Heart right ventricle (tissue), 16 donors: ENCODE measurements at regions of chr16 and their contacts with region 1.

Region 1: DNA sequence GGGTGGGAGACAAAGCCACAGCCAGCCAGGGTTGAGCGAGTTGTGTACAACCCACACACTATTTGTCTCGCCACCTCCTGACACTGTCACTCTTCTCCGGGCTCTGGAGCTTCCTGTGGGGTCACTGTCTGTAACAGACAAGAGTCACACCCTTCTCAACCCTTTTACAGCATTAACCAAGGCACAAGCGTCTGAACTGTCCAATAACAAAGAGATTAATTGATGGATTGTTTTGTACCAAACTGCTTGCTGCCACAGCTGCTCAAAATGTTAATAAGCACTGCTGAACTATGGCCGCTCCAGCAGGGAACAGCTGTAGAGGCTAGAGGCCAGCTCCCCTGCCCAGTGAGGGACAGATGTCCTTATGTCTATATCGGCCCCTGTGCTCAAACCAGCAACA is 25.2 kb upstream of the HYDIN start:
- DNase-seq: no peak
- ATAC-seq: peak in 1 of 8 donors; percentile 40
- H3K4me3 ChIP-seq: no peak overlapping the region
- H3K27ac ChIP-seq: no peak overlapping the region
- H3K4me1 ChIP-seq: peaks cover 0 to 5% (median 0%) of the 10 kb centered on the region in 9 donors
- H3K27me3 ChIP-seq: peaks cover 0 to 4% (median 0%) of the 10 kb centered on the region in 7 donors
- CTCF ChIP-seq: no peak

Region 2: GRCh38 chr16:71303938-71304337 is 48.2 kb after region 1 on chr16:
- intact Hi-C with region 1: loop called in 1 of 10 experiments (anchors 10 kb)
- DNase-seq: no peak
- ATAC-seq: no peak
- H3K4me3 ChIP-seq: no peak overlapping the region
- H3K27ac ChIP-seq: no peak overlapping the region
- H3K4me1 ChIP-seq: no peaks in the 10 kb centered on the region
- H3K27me3 ChIP-seq: peaks cover 0 to 22% (median 3%) of the 10 kb centered on the region in 7 donors
- CTCF ChIP-seq: no peak

Region 3: GRCh38 chr16:71387045-71387871 is 131.5 kb after region 1 on chr16:
- intact Hi-C with region 1: no loop called
- DNase-seq: no peak
- ATAC-seq: no peak
- H3K4me3 ChIP-seq: no peak overlapping the region
- H3K27ac ChIP-seq: no peak overlapping the region
- H3K4me1 ChIP-seq: no peaks in the 10 kb centered on the region
- H3K27me3 ChIP-seq: peaks cover 8 to 57% (median 40%) of the 10 kb centered on the region in 7 donors
- CTCF ChIP-seq: no peak